ENCODE measurements at regions of chr5 and their contacts with region 1.

Region 1: GRCh38 chr5:143824851-143825720 is 13.1 kb downstream of the HMHB1 start:
- DNase-seq: peak; percentile 64 to 90 (median 85)
- ATAC-seq: peak; percentile 98
- H3K4me3 ChIP-seq: no peak overlapping the region
- H3K4me3 Mint-ChIP-seq: no peak overlapping the region
- H3K27ac ChIP-seq: no peak overlapping the region
- H3K27ac Mint-ChIP-seq: no peak overlapping the region
- H3K4me1 ChIP-seq: no peaks in the 10 kb centered on the region
- H3K4me1 Mint-ChIP-seq: peaks cover 9% of the 10 kb centered on the region
- H3K27me3 ChIP-seq: no peaks in the 10 kb centered on the region
- H3K27me3 Mint-ChIP-seq: peaks cover 2% of the 10 kb centered on the region
- CTCF ChIP-seq: peak; percentile 95

Region 2: GRCh38 chr5:142246258-142246657 is 1578.8 kb before region 1 on chr5:
- CTCF ChIA-PET with region 1: no interaction called
- POLR2A ChIA-PET with region 1: no interaction called
- intact Hi-C with region 1: no loop called
- DNase-seq: no peak
- ATAC-seq: no peak
- H3K4me3 ChIP-seq: no peak overlapping the region
- H3K4me3 Mint-ChIP-seq: no peak overlapping the region
- H3K27ac ChIP-seq: no peak overlapping the region
- H3K27ac Mint-ChIP-seq: no peak overlapping the region
- H3K4me1 ChIP-seq: no peaks in the 10 kb centered on the region
- H3K4me1 Mint-ChIP-seq: no peaks in the 10 kb centered on the region
- H3K27me3 ChIP-seq: no peaks in the 10 kb centered on the region
- H3K27me3 Mint-ChIP-seq: no peaks in the 10 kb centered on the region
- CTCF ChIP-seq: no peak

Region 3: GRCh38 chr5:142922223-142922952 is 902.7 kb before region 1 on chr5:
- CTCF ChIA-PET with region 1: interaction called, 5 read pairs
- POLR2A ChIA-PET with region 1: no interaction called
- intact Hi-C with region 1: loop called (anchors 1 to 2 kb)
- DNase-seq: peak in 2 of 9 experiments; percentile 50 to 67
- ATAC-seq: no peak
- H3K4me3 ChIP-seq: no peak overlapping the region
- H3K4me3 Mint-ChIP-seq: no peak overlapping the region
- H3K27ac ChIP-seq: peak overlapping the region in 1 of 2 experiments; percentile 21
- H3K27ac Mint-ChIP-seq: peak overlapping the region; percentile 37
- H3K4me1 ChIP-seq: peaks cover 7% of the 10 kb centered on the region
- H3K4me1 Mint-ChIP-seq: peaks cover 34% of the 10 kb centered on the region
- H3K27me3 ChIP-seq: no peaks in the 10 kb centered on the region
- H3K27me3 Mint-ChIP-seq: no peaks in the 10 kb centered on the region
- CTCF ChIP-seq: no peak

Region 4: DNA sequence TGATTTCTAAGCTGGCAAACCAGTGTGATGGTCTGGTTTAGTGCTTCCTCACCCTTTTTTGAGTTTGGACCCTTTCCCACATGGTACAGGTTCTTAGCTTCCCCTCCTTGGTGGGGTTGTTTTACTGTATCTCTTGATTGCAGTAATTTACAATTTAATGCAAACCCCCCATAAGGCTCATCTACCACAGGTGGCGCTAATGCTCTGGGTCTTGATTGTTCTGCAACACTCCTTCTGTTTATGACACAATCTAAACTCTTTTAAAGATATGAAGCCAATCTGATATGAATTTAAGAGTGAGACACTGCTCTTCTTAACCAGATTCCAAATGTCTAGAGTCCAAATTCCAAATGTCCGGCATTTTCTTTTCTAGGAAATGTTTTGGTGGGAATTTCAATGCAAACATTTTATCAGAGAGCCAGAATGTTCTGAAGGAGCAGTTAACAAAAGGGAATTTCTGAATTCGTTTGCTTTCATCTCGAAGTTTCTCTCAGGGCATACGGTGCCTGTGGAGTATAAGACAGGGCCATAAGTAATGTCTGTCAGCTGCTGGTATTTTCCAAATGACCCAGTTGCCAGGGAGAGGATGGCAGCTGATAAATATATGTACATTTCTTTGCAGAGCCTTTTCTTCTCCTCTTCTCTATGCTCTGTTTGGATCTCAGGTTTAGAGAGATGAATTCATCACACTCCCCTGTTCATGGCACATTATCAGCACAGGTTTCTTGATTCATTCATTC is 808.1 kb before region 1 on chr5:
- CTCF ChIA-PET with region 1: no interaction called
- POLR2A ChIA-PET with region 1: no interaction called
- intact Hi-C with region 1: loop called (anchors 5 kb)
- DNase-seq: peak in 6 of 9 experiments; percentile 30 to 68 (median 50)
- ATAC-seq: peak; percentile 48
- H3K4me3 ChIP-seq: no peak overlapping the region
- H3K4me3 Mint-ChIP-seq: no peak overlapping the region
- H3K27ac ChIP-seq: no peak overlapping the region
- H3K27ac Mint-ChIP-seq: peak overlapping the region; percentile 9
- H3K4me1 ChIP-seq: no peaks in the 10 kb centered on the region
- H3K4me1 Mint-ChIP-seq: peaks cover 3% of the 10 kb centered on the region
- H3K27me3 ChIP-seq: no peaks in the 10 kb centered on the region
- H3K27me3 Mint-ChIP-seq: no peaks in the 10 kb centered on the region
- CTCF ChIP-seq: peak; percentile 38

Region 5: DNA sequence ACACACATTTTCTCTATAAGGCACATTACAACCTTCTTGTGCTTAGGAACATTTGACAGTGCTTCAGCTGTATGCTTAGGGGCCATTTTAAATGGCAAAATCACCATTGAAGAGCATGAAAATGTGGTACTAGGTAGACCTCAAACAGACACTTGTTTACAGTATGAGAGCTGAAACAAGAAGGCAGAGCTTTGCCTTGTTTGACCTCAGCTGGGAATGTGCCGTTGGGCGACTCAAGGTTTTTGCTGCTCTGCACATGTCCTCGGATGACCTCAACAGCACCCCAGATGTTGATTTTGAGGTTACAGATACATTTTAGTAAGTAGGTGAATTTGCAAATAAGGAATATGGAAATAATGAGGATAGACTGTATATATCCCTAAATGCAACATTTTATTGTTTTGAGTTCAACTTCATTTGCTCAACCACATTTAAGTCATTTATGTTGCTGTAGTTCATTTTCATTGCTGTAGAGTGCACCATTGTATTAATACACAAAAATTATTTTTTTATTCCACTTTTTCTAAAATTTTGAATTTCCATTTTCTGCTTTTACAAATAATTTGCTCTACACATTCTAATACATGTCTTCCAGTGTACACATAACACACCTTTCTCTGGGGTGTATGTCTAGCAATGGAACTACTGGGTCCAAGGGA is 628.4 kb before region 1 on chr5:
- CTCF ChIA-PET with region 1: no interaction called
- POLR2A ChIA-PET with region 1: no interaction called
- intact Hi-C with region 1: loop called in 1 of 2 experiments (anchors 1 kb)
- DNase-seq: no peak
- ATAC-seq: no peak
- H3K4me3 ChIP-seq: no peak overlapping the region
- H3K4me3 Mint-ChIP-seq: no peak overlapping the region
- H3K27ac ChIP-seq: no peak overlapping the region
- H3K27ac Mint-ChIP-seq: no peak overlapping the region
- H3K4me1 ChIP-seq: no peaks in the 10 kb centered on the region
- H3K4me1 Mint-ChIP-seq: no peaks in the 10 kb centered on the region
- H3K27me3 ChIP-seq: no peaks in the 10 kb centered on the region
- H3K27me3 Mint-ChIP-seq: no peaks in the 10 kb centered on the region
- CTCF ChIP-seq: peak; percentile 30

Region 6: DNA sequence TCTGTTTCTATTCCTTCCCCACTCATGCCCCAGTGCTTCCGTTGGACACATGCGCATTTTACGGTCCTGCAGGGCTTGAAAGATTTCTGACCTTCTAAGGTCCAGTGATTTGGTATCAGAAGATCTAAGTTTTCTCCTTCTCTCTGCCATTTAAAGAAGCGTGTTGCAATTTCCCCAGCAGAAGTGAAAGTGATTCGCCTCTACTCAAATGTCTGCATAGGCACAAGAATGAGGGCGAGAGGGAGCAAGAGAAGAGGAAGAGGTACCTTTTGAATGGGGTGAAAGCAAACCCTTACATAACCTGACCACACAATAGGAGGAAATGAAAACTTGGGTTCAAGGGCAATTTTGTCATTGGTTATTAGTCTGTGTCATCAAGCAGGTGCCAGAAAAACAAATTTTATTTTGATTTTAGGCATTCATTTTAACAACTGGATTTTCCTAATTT is 389.9 kb before region 1 on chr5:
- CTCF ChIA-PET with region 1: interaction called, 3 read pairs
- POLR2A ChIA-PET with region 1: no interaction called
- intact Hi-C with region 1: loop called in 1 of 2 experiments (anchors 10 kb)
- DNase-seq: peak in 7 of 9 experiments; percentile 12 to 78 (median 49)
- ATAC-seq: peak; percentile 62
- H3K4me3 ChIP-seq: peak overlapping the region; percentile 44 to 52
- H3K4me3 Mint-ChIP-seq: peak overlapping the region; percentile 94
- H3K27ac ChIP-seq: peak overlapping the region; percentile 64 to 70
- H3K27ac Mint-ChIP-seq: peak overlapping the region; percentile 97
- H3K4me1 ChIP-seq: peaks cover 24% of the 10 kb centered on the region
- H3K4me1 Mint-ChIP-seq: peaks cover 69% of the 10 kb centered on the region
- H3K27me3 ChIP-seq: no peaks in the 10 kb centered on the region
- H3K27me3 Mint-ChIP-seq: no peaks in the 10 kb centered on the region
- CTCF ChIP-seq: no peak

Region 7: GRCh38 chr5:143806579-143806978 is 18.5 kb before region 1 on chr5:
- CTCF ChIA-PET with region 1: interaction called, 10 read pairs
- POLR2A ChIA-PET with region 1: no interaction called
- intact Hi-C with region 1: no loop called
- DNase-seq: no peak
- ATAC-seq: no peak
- H3K4me3 ChIP-seq: no peak overlapping the region
- H3K4me3 Mint-ChIP-seq: no peak overlapping the region
- H3K27ac ChIP-seq: no peak overlapping the region
- H3K27ac Mint-ChIP-seq: no peak overlapping the region
- H3K4me1 ChIP-seq: no peaks in the 10 kb centered on the region
- H3K4me1 Mint-ChIP-seq: peaks cover under 1% of the 10 kb centered on the region
- H3K27me3 ChIP-seq: no peaks in the 10 kb centered on the region
- H3K27me3 Mint-ChIP-seq: peaks cover 3% of the 10 kb centered on the region
- CTCF ChIP-seq: no peak

Region 8: GRCh38 chr5:144844086-144844485 is 1019.0 kb after region 1 on chr5:
- CTCF ChIA-PET with region 1: no interaction called
- POLR2A ChIA-PET with region 1: no interaction called
- intact Hi-C with region 1: no loop called
- DNase-seq: no peak
- ATAC-seq: no peak
- H3K4me3 ChIP-seq: no peak overlapping the region
- H3K4me3 Mint-ChIP-seq: no peak overlapping the region
- H3K27ac ChIP-seq: no peak overlapping the region
- H3K27ac Mint-ChIP-seq: no peak overlapping the region
- H3K4me1 ChIP-seq: no peaks in the 10 kb centered on the region
- H3K4me1 Mint-ChIP-seq: no peaks in the 10 kb centered on the region
- H3K27me3 ChIP-seq: no peaks in the 10 kb centered on the region
- H3K27me3 Mint-ChIP-seq: no peaks in the 10 kb centered on the region
- CTCF ChIP-seq: no peak

Measured in CD8-positive, alpha-beta T cell (primary cell).